Gastrocnemius medialis (tissue), 4 donors: ENCODE measurements at regions of chr18 and their contacts with region 1.

Region 1: GRCh38 chr18:61502472-61502871 is 169.2 kb downstream of the CDH20 start:
- DNase-seq: no peak
- ATAC-seq: no peak
- H3K4me3 ChIP-seq: no peak overlapping the region
- H3K27ac ChIP-seq: no peak overlapping the region
- H3K4me1 ChIP-seq: no peaks in the 10 kb centered on the region
- H3K27me3 ChIP-seq: no peaks in the 10 kb centered on the region
- CTCF ChIP-seq: peak in 3 of 5 experiments; percentile 23 to 52 (median 34)
- POLR2A ChIP-seq: no peak

Region 2: DNA sequence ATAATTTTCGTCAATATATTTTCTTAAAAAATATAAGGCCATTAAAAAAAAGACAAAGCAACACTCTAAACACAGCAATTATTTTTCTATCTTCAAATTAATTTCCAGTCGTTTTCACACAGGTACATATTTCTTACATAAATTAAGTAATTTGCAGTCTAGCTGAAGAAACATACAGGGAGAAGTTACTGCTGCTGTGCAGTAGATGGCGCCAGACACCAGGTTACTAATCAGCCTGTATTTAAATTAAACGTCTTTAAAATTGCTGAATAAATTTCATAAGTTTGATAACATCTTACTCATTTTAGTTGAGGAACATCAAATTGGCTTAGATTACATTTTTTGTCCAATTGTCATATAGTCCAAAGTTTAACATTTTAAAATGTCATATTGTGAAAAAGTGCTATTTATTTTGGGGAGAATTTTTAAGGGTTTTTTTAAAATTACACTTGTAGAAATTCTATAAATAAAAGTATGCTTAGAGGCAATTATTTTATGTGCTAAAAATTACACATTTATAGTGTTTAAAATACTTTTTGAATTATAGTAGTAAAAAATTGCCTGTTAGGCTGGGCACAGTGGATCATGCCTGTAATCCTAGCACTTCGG is 1514.3 kb before region 1 on chr18:
- in situ Hi-C with region 1: no loop called
- intact Hi-C with region 1: loop called (anchors 5 kb)
- DNase-seq: no peak
- ATAC-seq: no peak
- H3K4me3 ChIP-seq: no peak overlapping the region
- H3K27ac ChIP-seq: no peak overlapping the region
- H3K4me1 ChIP-seq: no peaks in the 10 kb centered on the region
- H3K27me3 ChIP-seq: no peaks in the 10 kb centered on the region
- CTCF ChIP-seq: peak; percentile 38 to 81 (median 65)
- POLR2A ChIP-seq: no peak

Region 3: DNA sequence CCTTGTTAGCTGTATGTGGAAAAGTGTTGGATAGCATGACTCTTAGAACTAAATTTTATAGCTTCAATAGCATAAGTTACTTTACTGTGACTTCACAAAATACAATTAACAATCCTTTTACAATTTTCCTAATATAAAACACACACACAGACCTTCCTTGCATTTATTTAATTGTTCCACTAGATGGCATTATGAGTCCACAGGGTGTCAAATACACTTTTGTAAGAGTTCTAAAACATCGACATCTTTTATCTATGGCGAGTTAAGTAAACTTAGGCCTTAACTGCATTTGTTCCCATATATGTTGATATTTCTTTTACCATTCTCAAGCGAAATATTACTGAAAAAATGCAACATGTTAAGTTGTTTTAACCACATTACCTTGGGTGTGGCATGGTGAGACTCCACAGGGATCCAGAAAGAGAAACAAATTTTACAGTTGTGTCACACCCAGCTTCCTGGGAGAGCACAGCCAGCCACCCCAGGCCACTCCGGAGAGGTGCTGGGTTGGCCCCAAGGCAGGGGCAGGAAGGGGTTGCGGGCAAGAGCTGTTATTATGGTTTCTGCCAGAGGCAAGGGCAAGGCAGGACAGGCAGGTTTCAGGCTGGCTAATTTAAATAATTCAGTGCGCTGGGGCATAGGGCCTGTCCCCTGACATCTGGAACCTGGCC is 817.5 kb before region 1 on chr18:
- in situ Hi-C with region 1: no loop called
- intact Hi-C with region 1: loop called (anchors 5 kb)
- DNase-seq: no peak
- ATAC-seq: no peak
- H3K4me3 ChIP-seq: no peak overlapping the region
- H3K27ac ChIP-seq: no peak overlapping the region
- H3K4me1 ChIP-seq: no peaks in the 10 kb centered on the region
- H3K27me3 ChIP-seq: no peaks in the 10 kb centered on the region
- CTCF ChIP-seq: peak in 2 of 5 experiments; percentile 20 to 43
- POLR2A ChIP-seq: no peak

Region 4: GRCh38 chr18:61085761-61086160 is 416.7 kb before region 1 on chr18:
- in situ Hi-C with region 1: loop called in 1 of 4 experiments (anchors 25 kb)
- intact Hi-C with region 1: no loop called
- DNase-seq: no peak
- ATAC-seq: no peak
- H3K4me3 ChIP-seq: no peak overlapping the region
- H3K27ac ChIP-seq: no peak overlapping the region
- H3K4me1 ChIP-seq: no peaks in the 10 kb centered on the region
- H3K27me3 ChIP-seq: no peaks in the 10 kb centered on the region
- CTCF ChIP-seq: no peak
- POLR2A ChIP-seq: no peak